AG04450 (cell line): ENCODE measurements at regions of chr11 and their contacts with region 1.

Region 1: DNA sequence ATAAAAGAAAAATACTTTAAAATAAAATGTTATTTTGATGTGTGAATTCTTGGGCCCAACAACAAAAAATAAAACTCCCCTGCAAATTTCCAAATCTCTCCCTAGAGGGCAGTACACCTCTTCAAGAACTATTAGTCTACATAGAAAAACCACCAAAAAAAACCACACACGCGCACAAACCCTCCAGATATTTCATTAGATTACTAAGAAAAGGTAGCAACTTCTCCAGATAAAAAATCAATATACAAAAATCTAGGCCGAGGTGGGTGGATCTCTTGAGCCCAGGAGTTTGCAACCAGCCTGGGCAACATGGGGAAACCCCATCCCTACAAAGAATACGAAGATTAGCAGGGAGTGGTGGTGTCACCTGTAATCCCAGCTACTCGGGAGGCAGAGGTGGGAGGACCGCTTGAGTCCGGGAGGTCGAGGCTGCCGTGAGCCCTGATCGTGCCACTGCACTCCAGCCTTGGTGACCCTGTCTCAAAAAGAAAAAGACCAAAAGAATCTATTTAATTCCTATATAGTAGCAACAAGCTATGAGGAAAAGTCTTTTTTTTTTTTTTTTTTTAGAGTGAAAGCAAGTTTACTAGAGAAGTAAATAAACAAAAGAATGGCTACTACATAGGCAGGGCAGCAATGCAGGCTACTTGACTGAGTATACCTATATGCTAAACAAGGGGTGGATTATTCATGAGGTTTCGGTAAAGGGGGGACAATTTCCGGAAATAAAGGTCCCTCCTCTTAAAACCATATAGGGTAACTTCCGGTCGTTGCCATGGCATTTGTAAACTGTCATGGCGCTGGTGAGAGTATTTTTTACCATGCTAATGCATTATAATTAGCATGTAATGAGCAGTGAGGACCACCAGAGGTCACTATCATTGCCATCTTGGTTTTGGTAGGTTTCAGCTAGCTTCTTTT is 13.1 kb downstream of the B3GNT6 start:
- DNase-seq: peak; percentile 79
- H3K4me3 ChIP-seq: peak overlapping the region; percentile 59
- H3K27ac ChIP-seq: no peak overlapping the region
- H3K27me3 ChIP-seq: no peaks in the 10 kb centered on the region
- CTCF ChIP-seq: peak; percentile 77

Region 2: GRCh38 chr11:76935042-76935441 is 112.2 kb before region 1 on chr11:
- CTCF ChIA-PET with region 1: no interaction called
- POLR2A ChIA-PET with region 1: no interaction called
- DNase-seq: no peak
- H3K4me3 ChIP-seq: no peak overlapping the region
- H3K27ac ChIP-seq: no peak overlapping the region
- H3K27me3 ChIP-seq: no peaks in the 10 kb centered on the region
- CTCF ChIP-seq: no peak

Region 3: GRCh38 chr11:77073328-77074001 is 26.2 kb after region 1 on chr11:
- CTCF ChIA-PET with region 1: interaction called, 13 read pairs
- POLR2A ChIA-PET with region 1: no interaction called
- DNase-seq: peak; percentile 80
- H3K4me3 ChIP-seq: no peak overlapping the region
- H3K27ac ChIP-seq: peak overlapping the region; percentile 99
- H3K27me3 ChIP-seq: no peaks in the 10 kb centered on the region
- CTCF ChIP-seq: peak; percentile 56

Region 4: GRCh38 chr11:77091146-77091940 is 44.1 kb after region 1 on chr11:
- CTCF ChIA-PET with region 1: interaction called, 156 read pairs
- POLR2A ChIA-PET with region 1: interaction called, 6 read pairs
- DNase-seq: no peak
- H3K4me3 ChIP-seq: no peak overlapping the region
- H3K27ac ChIP-seq: no peak overlapping the region
- H3K27me3 ChIP-seq: no peaks in the 10 kb centered on the region
- CTCF ChIP-seq: peak; percentile 96

Region 5: GRCh38 chr11:77127232-77127911 is 80.1 kb after region 1 on chr11:
- CTCF ChIA-PET with region 1: interaction called, 10 read pairs
- POLR2A ChIA-PET with region 1: interaction called, 5 read pairs
- DNase-seq: no peak
- H3K4me3 ChIP-seq: peak overlapping the region; percentile 59
- H3K27ac ChIP-seq: no peak overlapping the region
- H3K27me3 ChIP-seq: no peaks in the 10 kb centered on the region
- CTCF ChIP-seq: peak; percentile 100

Region 6: GRCh38 chr11:77602381-77603088 is 555.3 kb after region 1 on chr11:
- CTCF ChIA-PET with region 1: no interaction called
- POLR2A ChIA-PET with region 1: interaction called, 10 read pairs
- DNase-seq: peak; percentile 66
- H3K4me3 ChIP-seq: no peak overlapping the region
- H3K27ac ChIP-seq: peak overlapping the region; percentile 95
- H3K27me3 ChIP-seq: no peaks in the 10 kb centered on the region
- CTCF ChIP-seq: no peak